ENCODE measurements at regions of chr16 and their contacts with region 1.

Region 1: GRCh38 chr16:30091474-30092372 is at the start of gene TBX6:
- DNase-seq: peak; percentile 97
- ATAC-seq: peak; percentile 86
- H3K4me3 Mint-ChIP-seq: peak within 1 kb of the TSS; percentile 84
- H3K27ac Mint-ChIP-seq: peak within 1 kb of the TSS; percentile 96
- H3K4me1 Mint-ChIP-seq: peaks cover 53% of the 10 kb centered on the region
- H3K27me3 Mint-ChIP-seq: no peaks in the 10 kb centered on the region
- total RNA-seq, gene TBX6: 2.0 to 2.9 TPM

Region 2: GRCh38 chr16:30065143-30065850 is 26.4 kb before region 1 on chr16 and contains the start of gene ALDOA:
- CTCF ChIA-PET with region 1: interaction called, 107 read pairs
- DNase-seq: peak; percentile 98
- ATAC-seq: peak; percentile 89
- H3K4me3 Mint-ChIP-seq: peak within 1 kb of the TSS; percentile 95
- H3K27ac Mint-ChIP-seq: peak within 1 kb of the TSS; percentile 97
- H3K4me1 Mint-ChIP-seq: peaks cover 45% of the 10 kb centered on the region
- H3K27me3 Mint-ChIP-seq: no peaks in the 10 kb centered on the region
- total RNA-seq, gene ALDOA: 1,292 to 1,318 TPM

Region 3: GRCh38 chr16:30104494-30104968 is 12.8 kb after region 1 on chr16:
- CTCF ChIA-PET with region 1: interaction called, 44 read pairs
- DNase-seq: no peak
- ATAC-seq: no peak
- H3K4me3 Mint-ChIP-seq: no peak overlapping the region
- H3K27ac Mint-ChIP-seq: no peak overlapping the region
- H3K4me1 Mint-ChIP-seq: no peaks in the 10 kb centered on the region
- H3K27me3 Mint-ChIP-seq: no peaks in the 10 kb centered on the region

Region 4: GRCh38 chr16:30131869-30132475 is 40.2 kb after region 1 on chr16:
- CTCF ChIA-PET with region 1: interaction called, 19 read pairs
- DNase-seq: no peak
- ATAC-seq: no peak
- H3K4me3 Mint-ChIP-seq: no peak overlapping the region
- H3K27ac Mint-ChIP-seq: peak overlapping the region; percentile 77
- H3K4me1 Mint-ChIP-seq: peaks cover 31% of the 10 kb centered on the region
- H3K27me3 Mint-ChIP-seq: no peaks in the 10 kb centered on the region

Region 5: GRCh38 chr16:30183233-30184095 is 91.7 kb after region 1 on chr16 and contains the start of gene CORO1A:
- CTCF ChIA-PET with region 1: interaction called, 20 read pairs
- DNase-seq: peak; percentile 93
- ATAC-seq: peak; percentile 59
- H3K4me3 Mint-ChIP-seq: peak within 1 kb of the TSS; percentile 100
- H3K27ac Mint-ChIP-seq: peak within 1 kb of the TSS; percentile 100
- H3K4me1 Mint-ChIP-seq: peaks cover 30% of the 10 kb centered on the region
- H3K27me3 Mint-ChIP-seq: no peaks in the 10 kb centered on the region
- total RNA-seq, gene CORO1A: 1,639 to 1,875 TPM